ENCODE measurements at regions of chr6 and their contacts with region 1.

Region 1: DNA sequence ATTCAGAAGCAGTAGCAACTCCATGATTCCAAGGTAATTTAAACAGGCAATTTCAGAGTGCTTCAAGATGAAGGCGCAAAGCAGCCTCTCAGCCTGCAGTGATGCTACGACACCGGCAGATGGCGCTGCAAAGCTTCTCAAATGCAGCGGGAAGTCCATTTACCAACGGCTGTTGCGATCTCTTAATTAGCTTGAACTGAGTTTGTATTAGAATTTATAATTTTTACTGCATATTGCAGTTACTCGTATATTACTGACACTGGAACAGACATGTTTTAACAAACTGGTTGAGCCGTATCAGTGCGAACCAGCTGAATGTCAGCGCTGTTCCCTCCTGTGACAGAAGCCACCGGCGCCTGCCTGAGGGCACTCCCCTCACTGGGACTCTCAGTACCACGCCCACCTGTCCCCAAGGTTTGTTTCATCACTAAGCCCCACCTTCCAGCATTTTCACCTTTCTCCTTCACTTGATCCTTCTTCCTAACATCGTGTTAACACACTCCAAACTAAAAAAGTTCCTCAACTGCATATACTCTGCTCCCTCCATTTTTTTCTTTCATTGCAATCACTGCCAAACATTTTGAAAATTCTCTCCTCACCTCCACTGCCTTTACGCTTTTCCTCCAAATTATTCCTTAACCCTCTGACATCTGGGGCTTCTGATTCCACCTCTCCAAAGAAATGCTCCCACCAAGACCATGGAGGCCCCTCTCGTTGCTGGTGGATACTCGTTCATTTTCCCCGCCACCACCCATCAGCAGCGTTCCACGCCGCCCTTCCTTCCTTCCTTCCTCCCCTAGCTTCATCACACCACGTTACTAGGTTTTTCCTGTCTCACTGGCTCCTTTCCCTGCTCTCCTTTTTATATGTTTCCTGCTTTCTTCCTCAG is 14.5 kb downstream of the GNL1 start:
- DNase-seq: peak; percentile 80
- ATAC-seq: peak; percentile 85
- H3K4me3 Mint-ChIP-seq: peak overlapping the region; percentile 74
- H3K27ac Mint-ChIP-seq: no peak overlapping the region
- H3K4me1 Mint-ChIP-seq: peaks cover 10% of the 10 kb centered on the region
- H3K27me3 Mint-ChIP-seq: no peaks in the 10 kb centered on the region; the same call in 1 of the 2 replicates
- CTCF ChIP-seq: peak; percentile 97

Region 2: DNA sequence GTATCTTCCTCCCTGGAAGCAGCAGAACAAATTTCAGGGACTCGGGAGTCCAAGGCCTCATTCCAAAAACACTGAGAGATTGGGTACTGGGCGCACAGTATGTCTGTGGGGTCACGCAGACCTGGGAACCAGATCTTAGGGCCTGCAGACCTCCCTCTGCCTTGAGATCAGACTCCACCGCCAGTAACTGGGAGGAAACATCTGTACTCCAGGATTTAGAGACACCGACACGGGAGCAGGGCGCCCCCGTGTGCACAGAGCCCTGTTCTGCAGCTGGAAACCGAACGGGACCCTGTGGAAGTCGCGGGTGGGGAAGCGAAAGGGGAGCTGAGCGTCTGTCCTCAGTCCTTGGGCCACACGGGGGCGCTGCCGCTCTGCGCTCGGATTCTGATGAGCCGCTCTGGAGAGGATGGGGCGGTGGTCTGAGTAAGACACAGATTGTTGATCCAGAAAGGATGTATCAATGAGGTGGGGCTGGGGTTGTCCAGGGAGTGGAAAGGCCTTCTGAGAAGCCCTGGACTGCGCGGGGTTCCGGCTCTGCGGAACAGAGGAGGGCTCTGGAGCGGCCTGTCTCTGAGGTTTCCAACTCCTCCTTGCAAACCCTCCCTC is 88.1 kb before region 1 on chr6:
- CTCF ChIA-PET with region 1: interaction called, 22 read pairs
- POLR2A ChIA-PET with region 1: no interaction called
- DNase-seq: peak; percentile 96
- ATAC-seq: peak; percentile 95
- H3K4me3 Mint-ChIP-seq: no peak overlapping the region
- H3K27ac Mint-ChIP-seq: no peak overlapping the region
- H3K4me1 Mint-ChIP-seq: peaks cover 5% of the 10 kb centered on the region; the same call in 1 of the 2 replicates
- H3K27me3 Mint-ChIP-seq: peaks cover 89% of the 10 kb centered on the region
- CTCF ChIP-seq: peak; percentile 88

Region 3: GRCh38 chr6:30483677-30484279 is 58.0 kb before region 1 on chr6:
- CTCF ChIA-PET with region 1: interaction called, 212 read pairs
- POLR2A ChIA-PET with region 1: interaction called, 4 read pairs
- DNase-seq: no peak
- ATAC-seq: no peak
- H3K4me3 Mint-ChIP-seq: no peak overlapping the region
- H3K27ac Mint-ChIP-seq: no peak overlapping the region
- H3K4me1 Mint-ChIP-seq: peaks cover 9% of the 10 kb centered on the region
- H3K27me3 Mint-ChIP-seq: peaks cover 50% of the 10 kb centered on the region
- CTCF ChIP-seq: 0 out of 2 replicates have a peak, but pooled peaks have one; percentile 21

Region 4: DNA sequence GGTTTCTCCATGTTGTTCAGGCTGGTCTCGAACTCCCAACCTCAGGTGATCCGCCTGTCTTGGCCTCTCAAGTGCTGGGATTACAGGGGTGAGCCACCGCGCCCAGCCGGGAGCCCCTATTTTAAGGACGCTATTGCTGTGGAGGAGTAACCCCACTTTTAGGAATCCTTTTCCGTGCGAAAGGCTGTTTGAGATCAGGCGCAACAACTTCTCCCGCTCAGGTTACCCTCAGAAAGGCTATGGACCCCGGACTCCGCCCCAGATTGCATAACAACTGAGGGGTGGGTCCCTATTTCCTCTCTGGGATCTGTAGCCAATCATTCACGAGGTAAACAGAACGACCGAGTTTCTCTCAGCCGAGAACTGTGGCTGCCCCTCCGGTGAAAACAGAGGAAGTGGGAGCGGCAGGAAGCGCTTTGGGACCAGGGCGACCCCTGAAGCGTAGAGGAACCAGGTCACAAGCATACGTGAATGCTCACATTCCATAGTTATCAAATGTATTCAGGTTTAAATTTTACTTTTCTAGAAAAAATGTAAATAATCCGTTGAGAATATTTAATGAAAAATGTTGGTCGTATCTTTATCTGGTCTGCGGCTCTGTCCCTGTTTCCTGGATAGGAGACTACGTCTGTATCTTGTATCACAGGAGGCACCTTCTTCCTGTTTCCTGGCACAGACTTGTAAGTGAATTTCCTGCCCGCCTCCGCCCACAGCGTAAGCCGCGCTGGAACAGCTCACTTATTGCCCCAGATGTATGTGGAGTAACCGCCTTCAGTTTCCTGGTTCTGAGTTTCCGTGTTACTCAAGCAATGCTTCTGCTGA is 25.6 kb before region 1 on chr6:
- CTCF ChIA-PET with region 1: interaction called, 16 read pairs
- POLR2A ChIA-PET with region 1: no interaction called
- DNase-seq: peak; percentile 88
- ATAC-seq: peak; percentile 90
- H3K4me3 Mint-ChIP-seq: peak overlapping the region; percentile 80
- H3K27ac Mint-ChIP-seq: peak overlapping the region; percentile 99
- H3K4me1 Mint-ChIP-seq: peaks cover 24% of the 10 kb centered on the region
- H3K27me3 Mint-ChIP-seq: peaks cover 4% of the 10 kb centered on the region
- CTCF ChIP-seq: no peak

Region 5: DNA sequence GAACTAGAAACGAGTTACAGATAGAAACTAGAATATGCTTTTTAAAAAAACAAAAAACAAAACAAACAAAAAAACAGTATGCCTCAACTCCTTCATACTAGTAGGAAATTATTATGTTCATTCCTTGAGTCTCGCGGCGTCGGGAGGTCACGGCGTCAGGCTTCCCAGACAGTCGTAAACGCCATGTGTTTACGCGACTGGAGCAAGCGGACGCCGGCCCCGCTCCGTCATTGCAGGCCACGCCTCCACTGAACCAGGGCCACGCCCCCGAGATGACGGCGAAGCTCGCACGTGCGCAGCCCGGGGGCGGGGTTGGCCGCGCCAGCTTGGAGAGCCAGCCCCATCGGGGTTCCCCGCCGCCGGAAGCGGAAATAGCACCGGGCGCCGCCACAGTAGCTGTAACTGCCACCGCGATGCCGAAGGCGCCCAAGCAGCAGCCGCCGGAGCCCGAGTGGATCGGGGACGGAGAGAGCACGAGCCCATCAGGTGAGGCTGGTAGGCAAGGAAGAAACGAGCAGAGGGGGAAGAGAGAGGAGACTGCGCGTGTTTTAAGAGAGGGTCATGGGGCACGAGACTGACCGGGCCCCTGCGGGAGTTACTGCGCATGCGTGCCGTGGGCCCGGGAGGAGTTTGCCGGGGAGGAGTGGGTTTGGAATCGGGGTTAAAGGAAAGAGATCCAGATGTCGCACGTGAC is 29.5 kb after region 1 on chr6 and contains the start of gene ABCF1:
- CTCF ChIA-PET with region 1: interaction called, 12 read pairs
- POLR2A ChIA-PET with region 1: no interaction called
- DNase-seq: peak; percentile 99
- ATAC-seq: peak; percentile 93
- H3K4me3 Mint-ChIP-seq: peak within 1 kb of the TSS; percentile 99
- H3K27ac Mint-ChIP-seq: peak within 1 kb of the TSS; percentile 98
- H3K4me1 Mint-ChIP-seq: peaks cover 33% of the 10 kb centered on the region
- H3K27me3 Mint-ChIP-seq: peaks cover 10% of the 10 kb centered on the region
- CTCF ChIP-seq: no peak
- total RNA-seq, gene ABCF1: 98.7 to 102 TPM (median 101 TPM) in 3 replicates

Region 6: GRCh38 chr6:30600451-30600961 is 58.7 kb after region 1 on chr6:
- CTCF ChIA-PET with region 1: interaction called, 16 read pairs
- POLR2A ChIA-PET with region 1: interaction called, 3 read pairs
- DNase-seq: no peak
- ATAC-seq: no peak
- H3K4me3 Mint-ChIP-seq: no peak overlapping the region
- H3K27ac Mint-ChIP-seq: no peak overlapping the region
- H3K4me1 Mint-ChIP-seq: no peaks in the 10 kb centered on the region
- H3K27me3 Mint-ChIP-seq: no peaks in the 10 kb centered on the region
- CTCF ChIP-seq: no peak